Right ventricle myocardium superior (tissue), 1 donor: ENCODE measurements at regions of chr4 and their contacts with region 1.

Region 1: DNA sequence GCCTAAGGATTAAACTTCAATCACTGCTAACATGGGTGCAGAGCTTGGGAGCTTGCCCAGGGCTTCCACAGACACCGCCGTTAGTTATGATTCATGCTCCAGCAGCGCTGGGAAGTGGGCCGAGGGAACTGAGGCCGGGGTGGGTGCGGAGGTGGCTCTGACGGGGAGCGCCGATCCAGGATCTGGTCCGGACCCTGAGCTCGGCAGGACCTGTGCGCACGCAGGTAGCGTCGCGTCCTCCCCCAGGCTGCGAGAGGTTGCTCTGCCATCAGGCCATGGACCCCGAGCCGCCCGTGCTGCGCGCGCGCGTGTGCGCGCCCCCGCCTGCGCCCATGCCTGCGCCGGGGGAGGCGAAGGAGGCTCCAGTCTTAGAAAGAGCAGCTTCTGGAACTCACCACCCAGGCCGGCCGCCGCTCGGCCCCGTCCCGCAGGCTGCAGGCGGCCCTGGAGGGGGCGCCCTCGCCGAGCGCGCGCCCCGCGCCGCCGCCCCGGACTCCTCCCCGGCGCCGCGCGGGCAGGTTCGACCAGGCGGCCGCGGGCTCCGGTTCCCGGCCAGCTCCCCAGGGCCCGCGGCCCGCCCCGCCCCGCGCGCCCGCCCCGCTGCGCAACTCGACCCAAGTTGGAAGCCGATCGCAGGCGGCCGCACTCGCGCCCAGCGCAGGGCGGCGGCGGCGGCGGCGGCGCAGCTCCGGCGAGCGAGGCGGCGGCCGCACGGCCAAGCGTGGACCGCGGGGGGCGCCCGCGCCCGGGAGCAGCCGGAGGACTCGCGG is 729 bp upstream of the ADRA2C start:
- DNase-seq: no peak
- ATAC-seq: peak; percentile 74

Region 2: GRCh38 chr4:3688018-3688998 is 77.1 kb before region 1 on chr4:
- intact Hi-C with region 1: no loop called
- DNase-seq: no peak
- ATAC-seq: no peak

Region 3: DNA sequence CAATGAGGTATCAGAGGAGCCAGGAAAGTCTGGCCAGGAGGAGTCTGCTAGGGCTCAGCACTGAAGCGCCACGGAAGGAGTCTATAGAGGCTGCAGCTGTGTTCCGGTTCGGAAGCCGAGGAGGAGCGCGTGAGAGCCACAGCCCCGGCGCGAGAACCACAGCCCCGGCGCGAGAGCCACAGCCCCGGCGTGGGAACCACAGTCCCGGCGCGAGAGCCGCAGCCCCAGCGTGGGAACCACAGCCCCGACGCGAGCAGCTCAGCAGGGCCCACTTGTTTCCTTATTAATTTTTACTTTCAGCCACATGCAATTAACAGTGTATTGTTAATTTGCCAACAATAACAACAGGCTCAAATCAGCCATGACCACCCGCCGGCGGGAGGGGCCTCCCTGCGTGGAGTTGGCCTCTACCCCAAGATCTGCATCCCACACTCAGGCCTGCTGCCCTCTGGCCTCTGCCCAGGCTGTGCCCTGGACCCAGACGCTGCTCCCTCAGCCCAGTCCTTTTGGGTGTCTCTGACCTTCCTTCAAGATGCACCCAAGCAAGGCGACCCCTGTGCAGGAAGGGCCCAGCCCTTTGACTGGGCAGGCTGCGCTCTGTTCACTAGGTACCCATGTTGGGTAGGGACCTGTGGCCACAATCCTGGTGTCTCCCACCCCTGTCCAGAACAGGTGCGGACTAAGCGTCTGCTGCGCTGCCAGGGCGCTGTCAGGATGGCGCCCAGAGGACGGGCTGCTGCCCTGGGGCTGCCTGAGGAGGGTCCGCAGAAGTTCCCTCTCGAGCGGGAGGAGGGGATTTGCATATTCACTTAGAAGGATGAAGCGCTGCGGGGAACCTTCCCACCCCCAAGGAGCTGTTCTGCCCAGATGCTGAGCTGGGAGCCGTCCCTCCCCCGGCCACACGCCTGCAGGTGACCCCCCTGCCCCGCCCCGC is 114.5 kb after region 1 on chr4:
- intact Hi-C with region 1: loop called (anchors 5 kb)
- DNase-seq: peak; percentile 41
- ATAC-seq: peak; percentile 20